Right cardiac atrium (tissue), 5 donors: ENCODE measurements at regions of chr17 and their contacts with region 1.

Region 1: DNA sequence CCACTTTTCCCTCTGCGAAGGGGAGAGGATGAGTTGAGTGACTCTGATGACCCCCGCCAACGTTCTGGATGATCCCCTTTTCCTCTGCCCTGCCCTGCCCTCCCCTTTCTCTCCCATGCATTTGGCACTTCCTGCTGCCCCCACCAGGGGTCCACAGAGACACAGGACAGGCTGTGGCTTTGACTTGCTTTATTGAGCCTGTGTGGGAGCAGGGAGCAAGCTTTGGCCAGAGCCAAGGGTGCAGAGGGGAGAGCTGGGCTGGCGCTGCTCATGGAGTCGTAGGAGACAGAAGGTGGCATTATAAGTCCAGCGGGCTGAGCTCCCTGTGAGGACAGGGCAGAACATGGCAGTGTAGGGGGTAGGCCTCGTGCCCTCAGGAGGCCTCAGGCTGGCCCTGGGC is 1.6 kb downstream of the PPY start:
- DNase-seq: peak in 2 of 3 donors; percentile 68 to 71
- ATAC-seq: peak in 1 of 2 donors; percentile 32
- H3K4me3 ChIP-seq: no peak overlapping the region
- H3K27ac ChIP-seq: no peak overlapping the region
- H3K4me1 ChIP-seq: no peaks in the 10 kb centered on the region
- H3K27me3 ChIP-seq: no peaks in the 10 kb centered on the region

Region 2: GRCh38 chr17:43994272-43995149 is 53.9 kb after region 1 on chr17:
- intact Hi-C with region 1: loop called in 3 of 4 experiments (anchors 2 to 5 kb)
- DNase-seq: peak; percentile 73 to 89 (median 81)
- ATAC-seq: peak; percentile 90 to 92
- H3K4me3 ChIP-seq: peak overlapping the region; percentile 8
- H3K27ac ChIP-seq: no peak overlapping the region
- H3K4me1 ChIP-seq: no peaks in the 10 kb centered on the region
- H3K27me3 ChIP-seq: no peaks in the 10 kb centered on the region

Region 3: DNA sequence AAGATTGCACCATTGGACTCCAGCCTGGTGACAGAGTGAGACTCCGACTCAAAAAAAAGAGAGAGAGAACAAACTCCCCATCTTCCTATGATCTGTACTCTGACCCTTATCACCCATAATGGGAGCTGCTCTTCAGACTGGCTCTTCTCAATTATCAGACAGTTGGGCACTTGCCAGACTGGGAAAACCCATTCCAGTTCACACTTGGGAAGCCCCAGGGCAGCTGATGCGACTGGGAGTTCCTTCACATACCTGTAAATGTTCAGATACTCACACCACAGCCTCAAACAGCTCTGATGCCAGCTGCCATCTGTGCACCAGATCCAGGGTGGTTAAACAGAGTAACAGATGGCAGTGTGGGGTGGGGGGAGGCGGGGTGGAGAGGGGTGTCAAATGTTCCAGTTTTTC is 98.0 kb after region 1 on chr17:
- intact Hi-C with region 1: loop called in 3 of 4 experiments (anchors 5 to 10 kb)
- DNase-seq: peak in 1 of 3 donors; percentile 61
- ATAC-seq: peak; percentile 27 to 73
- H3K4me3 ChIP-seq: no peak overlapping the region
- H3K27ac ChIP-seq: peak overlapping the region; percentile 4
- H3K4me1 ChIP-seq: peaks cover 6% of the 10 kb centered on the region
- H3K27me3 ChIP-seq: no peaks in the 10 kb centered on the region

Region 4: DNA sequence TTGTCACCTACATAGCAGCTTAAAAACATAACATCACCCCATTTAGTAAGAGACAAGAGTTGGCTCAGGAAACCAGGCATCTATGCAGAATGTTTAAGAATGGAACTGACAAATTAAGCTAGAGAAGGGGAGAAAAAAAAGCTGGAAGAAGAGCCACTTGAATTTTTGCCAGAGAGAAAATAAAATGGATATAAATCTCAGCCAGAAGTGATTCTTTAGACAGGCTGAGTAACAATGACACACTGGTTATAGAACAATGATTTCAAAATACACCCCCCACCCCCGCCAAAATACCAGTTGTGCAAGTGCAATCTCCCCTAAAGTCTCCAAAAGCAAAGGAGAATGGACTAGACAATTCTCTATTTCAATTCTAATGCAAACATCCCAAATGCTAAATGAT is 103.4 kb after region 1 on chr17:
- intact Hi-C with region 1: loop called in 3 of 4 experiments (anchors 5 to 10 kb)
- DNase-seq: no peak
- ATAC-seq: no peak
- H3K4me3 ChIP-seq: no peak overlapping the region
- H3K27ac ChIP-seq: no peak overlapping the region
- H3K4me1 ChIP-seq: peaks cover 6% of the 10 kb centered on the region
- H3K27me3 ChIP-seq: no peaks in the 10 kb centered on the region